ENCODE measurements at regions of chr19 and their contacts with region 1.

Region 1: GRCh38 chr19:6516659-6517291 is 14.1 kb upstream of the TNFSF9 start:
- DNase-seq: peak; percentile 97
- ATAC-seq: peak; percentile 83
- H3K4me3 Mint-ChIP-seq: peak overlapping the region; percentile 93
- H3K27ac Mint-ChIP-seq: peak overlapping the region; percentile 98
- H3K4me1 Mint-ChIP-seq: peaks cover 29% of the 10 kb centered on the region
- H3K27me3 Mint-ChIP-seq: no peaks in the 10 kb centered on the region

Region 2: DNA sequence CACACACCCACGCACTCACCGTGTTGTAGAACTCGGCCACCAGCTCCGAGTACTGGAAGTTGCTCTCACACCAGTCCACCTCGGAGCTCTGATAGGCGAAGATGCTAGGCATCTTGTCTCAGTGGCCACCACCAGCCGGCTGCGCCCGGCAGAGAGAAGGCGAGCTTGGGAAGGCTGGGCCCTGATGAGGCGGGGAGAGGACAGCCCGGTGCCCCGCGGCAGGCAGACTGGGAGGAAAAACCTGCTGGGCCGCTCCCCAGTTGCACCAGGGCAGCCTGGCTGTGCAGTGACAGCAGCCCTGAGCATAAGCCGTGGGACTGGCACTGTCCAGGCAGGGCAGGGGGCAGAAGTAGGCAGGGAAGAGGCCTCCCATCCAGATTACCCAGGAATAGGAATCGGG is 183.3 kb before region 1 on chr19 and contains the start of gene ACER1:
- POLR2A ChIA-PET with region 1: no interaction called
- DNase-seq: no peak
- ATAC-seq: no peak
- H3K4me3 Mint-ChIP-seq: no peak within 1 kb of the TSS
- H3K27ac Mint-ChIP-seq: no peak within 1 kb of the TSS
- H3K4me1 Mint-ChIP-seq: no peaks in the 10 kb centered on the region
- H3K27me3 Mint-ChIP-seq: no peaks in the 10 kb centered on the region
- total RNA-seq, gene ACER1: 0.54 to 0.55 TPM

Region 3: DNA sequence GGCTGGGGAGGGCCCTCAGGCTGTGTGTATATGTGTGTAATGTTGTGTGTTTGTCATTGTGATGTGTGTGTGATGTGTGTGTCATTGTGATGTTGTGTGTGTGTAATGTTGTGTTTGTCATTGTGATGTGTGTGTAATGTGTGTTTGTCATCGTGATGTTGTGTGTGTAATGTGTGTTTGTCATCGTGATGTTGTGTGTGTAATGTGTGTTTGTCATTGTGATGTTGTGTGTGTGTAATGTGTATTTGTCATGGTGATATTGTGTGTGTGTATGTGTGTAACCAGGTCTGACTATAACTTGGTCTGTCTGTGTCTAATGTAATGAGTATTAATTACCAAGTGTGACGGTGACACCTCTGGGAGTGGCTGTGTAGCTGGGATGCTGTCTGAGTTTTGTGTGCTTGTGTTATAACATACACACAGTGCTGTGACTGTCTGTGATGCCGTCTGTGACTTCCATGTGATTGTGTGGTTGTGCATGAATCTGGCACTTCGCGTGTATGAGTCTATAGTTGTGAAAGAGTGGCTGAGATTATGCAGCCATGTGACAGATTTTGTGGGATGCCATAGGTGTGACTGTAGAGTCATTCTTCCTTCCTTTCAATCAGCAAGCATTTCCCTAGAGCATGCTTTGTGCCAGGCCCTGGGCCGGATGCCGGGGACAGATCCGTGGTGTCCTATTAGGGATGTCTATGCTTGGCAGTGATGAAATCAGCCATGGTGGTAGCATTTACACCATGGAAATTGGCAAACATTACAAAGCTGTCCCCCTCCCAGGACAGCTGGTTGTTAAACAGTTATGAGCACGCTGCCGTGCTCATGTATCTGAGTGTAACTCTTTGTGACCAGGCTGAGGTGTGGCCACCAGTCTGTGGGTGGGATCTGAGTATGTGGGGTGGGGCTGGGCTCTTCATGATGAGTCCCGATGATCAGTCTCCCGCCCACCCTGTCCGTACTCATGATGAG is 146.7 kb after region 1 on chr19:
- POLR2A ChIA-PET with region 1: no interaction called
- DNase-seq: no peak
- ATAC-seq: peak; percentile 10
- H3K4me3 Mint-ChIP-seq: no peak overlapping the region
- H3K27ac Mint-ChIP-seq: no peak overlapping the region
- H3K4me1 Mint-ChIP-seq: peaks cover 31% of the 10 kb centered on the region
- H3K27me3 Mint-ChIP-seq: no peaks in the 10 kb centered on the region

Region 4: DNA sequence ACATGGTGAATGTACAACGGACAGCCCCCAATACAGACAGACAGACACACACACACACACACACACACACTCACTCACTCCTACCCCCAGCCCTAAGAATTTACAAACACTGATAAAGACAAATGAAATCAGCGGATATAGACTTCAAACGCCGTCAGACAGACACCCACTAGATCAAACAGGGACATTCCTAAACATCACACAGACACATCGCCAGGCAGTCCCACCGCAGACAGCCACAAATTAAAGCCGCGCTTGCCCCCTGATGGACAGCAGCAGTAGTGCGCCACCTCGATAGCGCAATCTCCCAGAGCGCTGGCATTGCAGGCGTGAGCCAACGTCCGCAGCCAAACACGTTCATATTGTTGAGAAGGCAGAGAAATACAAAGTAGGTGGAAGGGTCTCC is 345.9 kb after region 1 on chr19:
- POLR2A ChIA-PET with region 1: interaction called, 14 read pairs
- DNase-seq: peak; percentile 88
- ATAC-seq: peak; percentile 84
- H3K4me3 Mint-ChIP-seq: peak overlapping the region; percentile 82
- H3K27ac Mint-ChIP-seq: peak overlapping the region; percentile 78
- H3K4me1 Mint-ChIP-seq: peaks cover 17% of the 10 kb centered on the region
- H3K27me3 Mint-ChIP-seq: no peaks in the 10 kb centered on the region